ENCODE measurements at regions of chr15 and their contacts with region 1.

Region 1: DNA sequence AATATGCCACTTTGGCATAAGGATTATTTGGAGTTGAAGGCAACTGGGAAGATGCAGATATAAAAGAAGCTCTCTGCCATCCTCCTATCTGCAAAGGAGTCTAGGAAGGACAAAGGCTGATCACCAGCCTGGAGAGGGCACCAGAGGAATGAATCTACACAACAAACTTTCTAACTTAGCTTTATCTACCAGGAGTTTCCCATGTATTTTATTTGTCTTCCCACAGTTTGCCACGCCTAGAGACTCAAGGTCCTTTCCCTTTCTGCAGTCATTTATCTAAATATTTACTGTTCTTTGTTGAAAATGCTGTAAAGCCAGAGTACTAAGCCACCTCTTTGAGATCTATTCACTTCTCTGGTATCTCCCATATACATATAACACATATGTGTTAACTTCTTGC is 32.2 kb downstream of the GPR176 start:
- DNase-seq: peak; percentile 8
- H3K4me3 ChIP-seq: no peak overlapping the region
- H3K27ac ChIP-seq: no peak overlapping the region
- H3K4me1 ChIP-seq: no peaks in the 10 kb centered on the region
- CTCF ChIP-seq: peak; percentile 60

Region 2: DNA sequence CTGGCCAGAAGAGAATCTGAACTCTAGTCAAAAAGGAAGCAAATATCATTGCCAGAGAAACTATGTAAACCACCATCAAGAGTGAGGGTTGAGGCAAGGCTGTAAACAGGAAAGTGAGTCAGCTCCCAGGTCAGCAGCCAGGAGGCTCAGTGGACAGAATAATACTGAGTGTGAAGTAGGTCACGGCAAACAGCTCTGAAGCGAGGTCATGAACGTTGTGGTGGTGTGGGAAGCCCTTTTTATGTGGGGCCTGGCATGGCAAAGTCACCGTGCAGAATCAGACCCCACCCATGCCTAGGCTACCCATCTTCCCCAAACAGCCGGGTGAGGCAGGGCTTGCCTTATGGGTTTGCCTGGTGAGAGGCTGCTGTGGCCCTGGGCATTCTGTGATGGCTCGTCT is 263.0 kb before region 1 on chr15:
- CTCF ChIA-PET with region 1: no interaction called
- POLR2A ChIA-PET with region 1: no interaction called
- intact Hi-C with region 1: no loop called
- DNase-seq: no peak
- H3K4me3 ChIP-seq: no peak overlapping the region
- H3K27ac ChIP-seq: no peak overlapping the region
- H3K4me1 ChIP-seq: peaks cover 6% of the 10 kb centered on the region
- CTCF ChIP-seq: no peak

Region 3: GRCh38 chr15:39686000-39686613 is 201.7 kb before region 1 on chr15:
- CTCF ChIA-PET with region 1: no interaction called
- POLR2A ChIA-PET with region 1: no interaction called
- intact Hi-C with region 1: no loop called
- DNase-seq: peak; percentile 60
- H3K4me3 ChIP-seq: no peak overlapping the region
- H3K27ac ChIP-seq: no peak overlapping the region
- H3K4me1 ChIP-seq: no peaks in the 10 kb centered on the region
- CTCF ChIP-seq: peak; percentile 93

Region 4: GRCh38 chr15:39736412-39737197 is 151.2 kb before region 1 on chr15:
- CTCF ChIA-PET with region 1: no interaction called
- POLR2A ChIA-PET with region 1: no interaction called
- intact Hi-C with region 1: no loop called
- DNase-seq: no peak
- H3K4me3 ChIP-seq: no peak overlapping the region
- H3K27ac ChIP-seq: no peak overlapping the region
- H3K4me1 ChIP-seq: no peaks in the 10 kb centered on the region
- CTCF ChIP-seq: no peak

Region 5: DNA sequence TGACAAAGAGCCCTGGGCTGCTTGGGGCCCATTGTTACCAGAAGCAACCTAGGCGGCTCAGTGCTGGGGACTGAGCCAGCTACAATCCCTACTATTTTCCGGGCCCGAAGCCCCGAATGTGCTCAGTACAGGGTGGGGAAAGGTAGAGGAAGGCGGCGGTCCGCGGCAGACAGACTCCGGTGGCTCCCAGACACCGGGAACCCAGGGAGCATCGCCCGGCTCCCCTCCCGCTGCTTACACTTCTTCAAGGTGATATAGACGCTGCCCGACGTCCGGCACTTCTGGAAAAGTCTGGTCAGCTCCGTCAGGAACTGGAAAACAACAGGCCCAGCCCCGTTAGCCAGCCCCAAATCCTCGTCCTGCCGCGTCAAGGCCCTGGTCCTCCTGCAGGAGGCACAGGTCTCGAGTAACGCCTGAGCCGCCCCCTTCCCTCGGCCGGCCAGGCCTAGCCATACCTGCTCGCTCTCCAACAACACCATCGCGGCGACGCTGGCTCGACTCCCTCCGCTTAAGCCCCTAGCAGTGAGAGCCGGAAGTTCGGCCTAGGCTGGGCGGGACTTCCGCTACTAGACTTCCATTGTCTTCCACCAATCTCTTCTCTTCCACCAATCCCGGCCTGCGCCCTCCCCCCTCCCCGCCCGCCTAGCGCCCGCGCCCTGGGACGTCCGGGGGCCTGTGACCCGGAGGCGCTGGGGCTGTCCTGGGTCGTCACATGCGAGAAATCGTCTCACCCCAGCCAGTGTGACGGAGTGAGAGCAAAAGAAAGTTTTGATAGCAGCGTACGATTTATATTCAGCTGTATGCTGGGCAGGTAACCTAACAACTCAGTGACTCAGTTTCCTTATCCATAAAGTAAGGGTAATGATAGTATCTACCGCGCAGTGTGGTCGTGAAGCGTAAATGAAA is 151.1 kb after region 1 on chr15 and contains the start of gene SRP14:
- CTCF ChIA-PET with region 1: no interaction called
- POLR2A ChIA-PET with region 1: no interaction called
- intact Hi-C with region 1: loop called (anchors 10 kb)
- DNase-seq: peak; percentile 96
- H3K4me3 ChIP-seq: peak within 1 kb of the TSS; percentile 94
- H3K27ac ChIP-seq: peak within 1 kb of the TSS; percentile 55
- H3K4me1 ChIP-seq: peaks cover 25% of the 10 kb centered on the region
- CTCF ChIP-seq: no peak
- total RNA-seq, gene SRP14: 188 and 250 TPM in 2 replicates